ENCODE measurements at regions of chr2 and their contacts with region 1.

Region 1: DNA sequence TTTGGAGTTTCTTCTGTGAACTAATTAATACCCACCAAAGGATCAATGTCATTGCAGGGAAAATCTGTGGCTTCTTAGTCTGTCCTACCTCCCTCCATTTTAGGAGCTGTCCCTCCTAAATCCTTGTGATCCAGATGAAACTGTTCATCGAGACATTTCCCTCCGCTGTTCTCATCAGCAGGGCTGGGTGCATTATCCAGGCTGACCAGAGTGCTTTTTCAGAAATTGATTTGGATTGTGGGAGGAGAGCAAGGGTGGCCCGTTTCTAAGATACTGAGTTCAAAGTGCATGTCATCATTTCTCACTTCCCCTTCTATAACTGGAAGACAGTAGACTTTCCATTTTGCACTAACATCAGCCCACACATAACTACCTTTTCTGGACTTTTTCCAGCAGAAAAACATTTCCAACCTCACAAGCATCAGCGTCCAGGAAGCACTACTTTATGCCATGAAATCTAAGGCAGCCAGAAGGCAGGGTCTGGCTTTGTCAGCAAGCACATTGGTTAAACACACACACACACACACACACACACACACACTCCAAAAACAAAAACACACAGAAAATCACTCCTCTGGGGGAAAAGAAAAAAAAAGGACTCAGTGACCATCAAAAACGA is 94.1 kb downstream of the ANKRD44 start:
- DNase-seq: peak in 1 of 9 donors; percentile 54
- ATAC-seq: peak; percentile 43
- H3K4me3 ChIP-seq: peak overlapping the region; percentile 28
- H3K4me3 Mint-ChIP-seq: peak overlapping the region; percentile 63 to 86 (median 74)
- H3K27ac ChIP-seq: peak overlapping the region; percentile 60
- H3K27ac Mint-ChIP-seq: peak overlapping the region; percentile 79 to 100 (median 97)
- H3K4me1 ChIP-seq: peaks cover 76 to 81% of the 10 kb centered on the region in 2 donors
- H3K4me1 Mint-ChIP-seq: peaks cover 57 to 96% (median 89%) of the 10 kb centered on the region in 7 donors
- H3K27me3 ChIP-seq: no peaks in the 10 kb centered on the region
- H3K27me3 Mint-ChIP-seq: no peaks in the 10 kb centered on the region

Region 2: DNA sequence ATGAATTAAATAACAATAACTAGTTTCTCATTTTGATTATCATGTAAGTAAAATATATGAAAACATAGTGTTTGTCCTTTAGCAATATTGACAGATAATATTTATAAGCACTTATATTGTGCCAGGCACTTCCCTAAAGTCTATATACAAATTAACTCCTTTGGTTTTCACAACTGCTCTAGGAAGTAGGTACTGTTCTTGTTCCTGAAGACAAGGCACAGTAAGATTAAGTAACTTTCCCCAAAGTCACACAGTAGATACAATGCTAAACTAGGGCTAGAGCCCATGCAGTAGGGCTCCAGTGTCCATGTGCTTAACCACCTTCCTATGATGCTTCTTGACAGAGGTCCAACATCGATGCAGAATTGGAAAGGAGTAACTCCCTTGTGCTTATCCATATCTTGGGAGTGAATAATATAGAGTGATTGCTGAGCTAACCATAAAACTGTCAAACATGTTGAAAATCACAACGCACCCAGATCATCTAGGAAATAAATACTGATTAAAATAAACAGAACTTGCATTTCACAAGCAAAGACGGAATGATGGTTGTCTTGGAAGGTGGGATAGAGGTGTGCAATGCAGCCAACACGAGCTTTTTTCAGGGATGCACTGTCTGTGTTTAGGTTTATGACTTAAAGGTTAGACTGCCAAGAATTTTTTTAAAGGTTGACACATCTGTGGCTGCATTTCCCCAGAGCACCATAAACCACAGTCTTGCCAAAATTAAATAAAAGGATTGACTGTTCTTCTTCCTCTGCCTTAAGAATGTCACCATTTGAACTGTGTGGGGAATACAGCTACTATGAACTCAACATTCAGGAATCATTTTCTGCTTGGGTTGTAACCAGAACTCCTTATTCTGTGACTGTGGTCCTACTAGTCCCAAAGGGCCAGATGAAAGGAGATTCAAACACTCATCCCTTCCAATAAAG is 13.3 kb after region 1 on chr2:
- CTCF ChIA-PET with region 1: interaction called, 4 read pairs
- POLR2A ChIA-PET with region 1: interaction called, 30 read pairs
- intact Hi-C with region 1: loop called (anchors 1 kb)
- DNase-seq: no peak
- ATAC-seq: no peak
- H3K4me3 ChIP-seq: no peak overlapping the region
- H3K4me3 Mint-ChIP-seq: peak overlapping the region in 9 of 10 donors; percentile 26 to 83 (median 47)
- H3K27ac ChIP-seq: peak overlapping the region; percentile 58
- H3K27ac Mint-ChIP-seq: peak overlapping the region in 8 of 9 donors; percentile 20 to 96 (median 82)
- H3K4me1 ChIP-seq: peaks cover 69 to 72% of the 10 kb centered on the region in 2 donors
- H3K4me1 Mint-ChIP-seq: peaks cover 68 to 100% (median 98%) of the 10 kb centered on the region in 7 donors
- H3K27me3 ChIP-seq: no peaks in the 10 kb centered on the region
- H3K27me3 Mint-ChIP-seq: no peaks in the 10 kb centered on the region

Region 3: GRCh38 chr2:198883604-198884003 is 1667.1 kb after region 1 on chr2:
- CTCF ChIA-PET with region 1: no interaction called
- POLR2A ChIA-PET with region 1: no interaction called
- intact Hi-C with region 1: no loop called
- DNase-seq: no peak
- ATAC-seq: no peak
- H3K4me3 ChIP-seq: no peak overlapping the region
- H3K4me3 Mint-ChIP-seq: no peak overlapping the region
- H3K27ac ChIP-seq: no peak overlapping the region
- H3K27ac Mint-ChIP-seq: no peak overlapping the region
- H3K4me1 ChIP-seq: no peaks in the 10 kb centered on the region
- H3K4me1 Mint-ChIP-seq: no peaks in the 10 kb centered on the region
- H3K27me3 ChIP-seq: no peaks in the 10 kb centered on the region
- H3K27me3 Mint-ChIP-seq: no peaks in the 10 kb centered on the region

Measured in naive thymus-derived CD4-positive, alpha-beta T cell (primary cell).